Right ventricle myocardium inferior (tissue), 1 donor: ENCODE measurements at regions of chr5 and their contacts with region 1.

Region 1: DNA sequence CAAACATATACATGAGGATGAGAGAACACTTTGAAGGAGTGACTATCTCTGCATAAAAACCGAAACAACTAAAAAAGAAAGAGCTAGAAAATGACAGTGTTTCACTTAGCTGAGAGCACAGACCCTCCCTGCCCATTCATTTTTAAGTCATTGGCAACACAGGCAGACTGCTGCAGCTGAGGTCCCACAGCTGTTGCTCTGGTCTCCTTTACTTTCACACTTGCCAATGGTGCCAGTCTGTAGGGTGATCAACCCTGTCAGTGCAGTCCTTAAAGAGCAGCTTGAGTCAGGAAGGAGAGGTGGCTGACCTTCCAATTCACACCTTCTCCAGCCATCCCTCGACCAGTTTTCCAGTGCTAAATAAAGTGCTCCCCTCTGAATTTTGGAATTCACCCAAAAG is 508.3 kb upstream of the CCNG1 start:
- DNase-seq: no peak
- ATAC-seq: no peak

Region 2: DNA sequence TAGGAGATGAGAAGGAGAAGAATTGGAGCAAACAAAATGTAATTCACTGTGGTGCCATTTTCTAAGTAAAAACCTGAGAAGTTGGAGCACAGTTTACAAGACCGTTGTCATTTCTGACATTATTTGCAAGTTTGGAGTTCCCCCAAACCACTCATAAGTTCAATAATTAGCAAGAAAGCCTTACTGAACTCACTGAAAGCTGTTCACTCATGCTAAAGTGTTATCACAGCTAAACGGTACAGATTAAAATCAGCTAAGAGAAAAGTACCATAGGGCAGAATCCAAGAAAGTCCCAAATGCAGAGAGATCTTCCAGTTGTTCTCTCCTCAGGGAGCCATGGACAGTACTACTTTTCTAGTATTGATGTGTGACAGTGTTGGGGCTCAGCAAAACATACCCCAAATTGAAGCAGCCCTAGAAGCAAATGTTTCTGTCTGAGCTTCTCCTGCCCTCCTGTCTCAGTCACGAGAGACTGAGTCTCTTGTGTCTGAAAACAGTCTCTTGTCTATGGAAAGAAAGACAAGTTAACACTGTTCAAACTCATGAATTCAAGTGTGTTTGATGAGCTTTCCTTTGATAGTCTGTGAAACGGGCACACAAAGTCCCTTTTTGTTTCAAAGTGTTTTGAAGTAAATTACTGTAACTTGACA is 640.3 kb before region 1 on chr5:
- intact Hi-C with region 1: no loop called
- DNase-seq: no peak
- ATAC-seq: no peak

Region 3: GRCh38 chr5:162916368-162916767 is 12.7 kb before region 1 on chr5:
- intact Hi-C with region 1: loop called (anchors 1 kb)
- DNase-seq: no peak
- ATAC-seq: no peak